ENCODE measurements at regions of chrX and their contacts with region 1.

Region 1: GRCh38 chrX:99445336-99445735 is 964.7 kb downstream of the PCDH19 start:
- DNase-seq: no peak
- ATAC-seq: no peak
- H3K4me3 ChIP-seq: no peak overlapping the region
- H3K27ac ChIP-seq: no peak overlapping the region
- H3K4me1 ChIP-seq: no peaks in the 10 kb centered on the region
- H3K27me3 ChIP-seq: no peaks in the 10 kb centered on the region
- CTCF ChIP-seq: no peak
- EP300 ChIP-seq: no peak
- POLR2A ChIP-seq: no peak
- RAD21 ChIP-seq: no peak

Region 2: DNA sequence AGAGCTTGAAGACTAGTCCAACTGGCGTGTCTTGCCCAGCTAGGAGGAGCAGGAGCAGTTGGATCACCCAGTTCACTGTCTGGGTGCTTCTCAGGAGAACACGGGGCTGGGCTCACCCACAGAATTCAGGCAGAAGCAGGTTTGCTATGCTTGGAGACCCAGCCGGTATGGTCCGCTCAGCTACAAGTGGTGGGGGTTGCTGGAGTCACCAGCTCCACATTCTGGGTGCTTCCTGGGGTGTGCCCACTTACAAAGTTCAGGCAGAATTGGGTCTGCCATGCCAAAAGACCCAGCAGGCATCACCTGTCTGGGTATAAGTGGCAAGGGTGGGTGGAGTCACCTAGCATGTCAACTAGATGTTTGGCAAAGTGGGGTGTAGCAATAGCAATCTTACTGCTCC is 97.1 kb before region 1 on chrX:
- CTCF ChIA-PET with region 1: no interaction called
- POLR2A ChIA-PET with region 1: no interaction called
- in situ Hi-C with region 1: no loop called
- intact Hi-C with region 1: no loop called
- DNase-seq: no peak
- ATAC-seq: no peak
- H3K4me3 ChIP-seq: no peak overlapping the region
- H3K27ac ChIP-seq: no peak overlapping the region
- H3K4me1 ChIP-seq: no peaks in the 10 kb centered on the region
- H3K27me3 ChIP-seq: no peaks in the 10 kb centered on the region
- CTCF ChIP-seq: no peak
- EP300 ChIP-seq: no peak
- POLR2A ChIP-seq: no peak
- RAD21 ChIP-seq: no peak

Region 3: GRCh38 chrX:99421796-99422195 is 23.5 kb before region 1 on chrX:
- CTCF ChIA-PET with region 1: no interaction called
- POLR2A ChIA-PET with region 1: no interaction called
- in situ Hi-C with region 1: no loop called
- intact Hi-C with region 1: loop called (anchors 2 kb)
- DNase-seq: no peak
- ATAC-seq: no peak
- H3K4me3 ChIP-seq: no peak overlapping the region
- H3K27ac ChIP-seq: no peak overlapping the region
- H3K4me1 ChIP-seq: no peaks in the 10 kb centered on the region
- H3K27me3 ChIP-seq: no peaks in the 10 kb centered on the region
- CTCF ChIP-seq: no peak
- EP300 ChIP-seq: no peak
- POLR2A ChIP-seq: no peak
- RAD21 ChIP-seq: no peak